BJ (cell line): ENCODE measurements at regions of chr7 and their contacts with region 1.

Region 1: DNA sequence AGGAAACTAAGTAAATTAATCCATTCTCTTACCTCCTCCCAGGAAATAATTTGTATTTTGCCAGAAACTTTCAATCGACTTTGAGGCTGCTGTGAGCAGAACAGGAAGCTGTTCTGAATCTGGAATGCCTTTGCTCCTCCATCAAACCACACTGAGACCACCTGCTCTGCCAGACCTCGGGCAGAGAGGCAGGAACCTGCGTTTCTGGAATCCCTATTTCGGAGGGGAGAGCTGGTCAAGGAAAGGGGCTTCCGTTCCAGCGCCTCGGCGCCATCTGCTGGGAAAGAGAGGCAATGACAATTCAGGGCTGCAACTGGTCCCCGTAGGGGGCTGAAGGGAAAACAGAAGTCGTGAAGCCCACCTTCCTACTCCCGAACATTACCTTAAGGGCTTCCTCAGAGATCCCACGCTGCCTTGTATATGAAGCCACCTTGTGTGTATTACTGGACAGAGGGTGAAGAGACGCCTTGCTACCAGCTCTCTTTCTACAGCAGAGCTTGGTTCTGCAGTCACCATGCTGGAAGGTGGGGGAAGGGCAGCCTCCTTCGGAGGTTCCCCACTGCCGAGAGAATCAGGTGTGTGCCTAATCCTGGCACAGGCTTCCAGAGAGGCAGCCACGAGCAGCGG is 31.2 kb downstream of the ZNF467 start:
- DNase-seq: no peak
- H3K4me3 ChIP-seq: peak overlapping the region; percentile 9; the same call in 1 of the 2 replicates
- H3K27me3 ChIP-seq: peaks cover 2% of the 10 kb centered on the region; the same call in 1 of the 2 replicates
- CTCF ChIP-seq: peak; percentile 94

Region 2: DNA sequence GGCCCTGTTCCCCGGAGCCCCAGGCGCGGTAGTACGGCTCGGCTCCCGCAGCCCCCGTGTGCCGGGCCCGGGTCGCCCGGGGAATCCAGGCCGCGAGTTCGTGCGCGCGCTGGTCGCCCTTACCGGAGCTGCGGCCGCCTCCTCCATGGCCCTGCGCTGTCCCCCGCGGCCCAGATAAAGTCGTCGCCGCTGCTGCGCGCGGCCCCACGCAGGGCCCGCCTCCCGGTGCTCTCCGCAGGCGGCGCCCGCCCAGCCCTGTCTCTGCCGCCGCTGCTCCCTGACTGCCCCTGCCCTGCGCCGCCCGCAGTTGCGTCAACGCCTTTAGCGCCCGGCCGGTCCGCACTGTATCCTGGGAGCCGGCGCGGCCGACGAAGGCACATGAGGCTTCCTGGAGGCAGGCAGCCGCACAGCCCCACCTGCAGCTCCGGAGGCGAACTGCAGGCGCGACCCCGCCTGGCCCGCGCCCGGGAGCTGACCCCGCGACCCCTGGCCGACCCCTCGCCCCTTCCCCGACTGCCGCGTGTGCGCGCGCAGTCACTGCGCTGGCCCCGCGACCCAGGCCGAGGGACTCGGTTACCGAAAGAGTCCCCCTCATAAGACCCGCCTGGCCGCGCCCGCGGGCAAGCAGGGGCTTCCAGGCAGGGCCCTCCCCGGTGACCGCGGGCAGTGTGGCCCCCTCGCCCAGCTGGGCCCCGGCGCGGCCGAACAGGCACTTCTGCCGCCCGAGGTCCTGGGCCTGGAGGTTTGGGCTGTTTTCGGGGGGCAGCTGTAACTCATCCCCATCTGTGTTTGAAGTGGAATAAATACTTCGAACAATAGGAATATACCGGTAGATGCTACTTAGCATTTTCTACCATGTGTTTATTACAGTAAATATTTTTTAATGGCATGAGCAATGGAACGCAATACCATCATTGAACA is 117.5 kb before region 1 on chr7:
- CTCF ChIA-PET with region 1: interaction called, 12 read pairs
- POLR2A ChIA-PET with region 1: no interaction called
- DNase-seq: peak; percentile 39
- H3K4me3 ChIP-seq: peak overlapping the region; percentile 59
- H3K27me3 ChIP-seq: 0 out of 2 replicates have a peak, but pooled peaks cover 2% of the 10 kb centered on the region
- CTCF ChIP-seq: peak; percentile 75

Region 3: DNA sequence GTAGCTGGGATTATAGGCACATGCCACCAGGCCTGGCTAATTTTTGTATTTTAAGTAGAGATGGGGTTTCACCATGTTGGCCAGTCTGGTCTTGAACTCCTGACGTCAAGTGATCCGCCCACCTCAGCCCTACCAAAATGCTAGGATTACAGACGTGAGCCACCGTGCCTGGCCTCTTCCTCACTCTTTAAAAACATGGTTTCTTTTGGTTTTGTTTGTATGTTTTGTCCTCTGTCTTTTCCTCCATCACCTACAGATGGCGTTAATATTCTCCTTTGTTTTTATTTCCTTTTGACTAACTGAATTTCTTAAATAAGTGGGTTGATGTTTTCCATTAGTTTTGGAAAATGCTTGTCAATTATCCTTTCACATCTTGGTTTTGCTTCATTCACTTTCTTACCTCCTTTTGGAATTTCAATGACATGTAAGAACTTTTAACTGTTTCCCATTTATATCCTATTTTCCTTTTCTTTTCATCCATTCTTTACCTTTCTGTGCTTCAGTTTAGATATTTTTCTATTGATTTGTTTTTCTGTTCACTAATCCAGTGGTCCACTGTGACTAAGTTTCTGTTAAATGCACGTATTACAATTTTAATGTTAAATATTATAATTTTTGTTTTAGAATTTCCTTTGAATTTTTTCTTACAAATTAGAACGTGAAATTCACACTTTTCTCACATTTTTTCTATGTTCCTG is 72.9 kb before region 1 on chr7:
- CTCF ChIA-PET with region 1: interaction called, 116 read pairs
- POLR2A ChIA-PET with region 1: interaction called, 3 read pairs
- DNase-seq: no peak
- H3K4me3 ChIP-seq: no peak overlapping the region
- H3K27me3 ChIP-seq: peaks cover 2% of the 10 kb centered on the region
- CTCF ChIP-seq: peak; percentile 49

Region 4: DNA sequence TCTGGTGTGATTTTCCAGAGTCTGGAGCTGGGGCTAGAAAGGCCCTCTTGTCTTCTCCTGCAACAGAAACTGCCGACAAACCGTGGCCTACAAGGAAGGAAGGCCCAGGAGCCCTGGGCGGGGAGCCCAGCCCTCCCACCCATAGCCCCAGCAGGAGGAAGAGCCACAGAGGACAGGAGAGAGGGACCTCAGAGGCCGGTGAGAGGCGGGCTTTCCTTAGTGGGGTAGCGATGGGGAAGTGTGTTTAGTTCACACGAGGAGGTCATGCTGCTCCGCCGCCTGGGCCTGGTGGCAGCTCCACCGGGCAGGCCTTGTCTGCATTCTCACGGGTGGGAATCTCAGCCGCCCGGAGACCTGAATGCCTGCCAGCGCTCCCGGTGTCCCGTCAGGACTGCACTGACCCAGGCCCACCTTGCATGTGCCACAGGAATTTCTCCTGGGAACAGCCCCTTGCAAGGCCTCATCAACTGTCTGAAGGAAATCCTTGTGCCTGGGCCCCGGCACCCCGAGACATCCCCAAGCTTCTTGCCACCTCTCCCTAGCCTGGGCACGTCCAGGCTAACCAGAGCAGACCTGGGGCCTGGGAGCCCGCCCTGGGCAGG is 19.7 kb before region 1 on chr7:
- CTCF ChIA-PET with region 1: interaction called, 13 read pairs
- POLR2A ChIA-PET with region 1: interaction called, 4 read pairs
- DNase-seq: no peak
- H3K4me3 ChIP-seq: no peak overlapping the region
- H3K27me3 ChIP-seq: no peaks in the 10 kb centered on the region
- CTCF ChIP-seq: no peak

Region 5: DNA sequence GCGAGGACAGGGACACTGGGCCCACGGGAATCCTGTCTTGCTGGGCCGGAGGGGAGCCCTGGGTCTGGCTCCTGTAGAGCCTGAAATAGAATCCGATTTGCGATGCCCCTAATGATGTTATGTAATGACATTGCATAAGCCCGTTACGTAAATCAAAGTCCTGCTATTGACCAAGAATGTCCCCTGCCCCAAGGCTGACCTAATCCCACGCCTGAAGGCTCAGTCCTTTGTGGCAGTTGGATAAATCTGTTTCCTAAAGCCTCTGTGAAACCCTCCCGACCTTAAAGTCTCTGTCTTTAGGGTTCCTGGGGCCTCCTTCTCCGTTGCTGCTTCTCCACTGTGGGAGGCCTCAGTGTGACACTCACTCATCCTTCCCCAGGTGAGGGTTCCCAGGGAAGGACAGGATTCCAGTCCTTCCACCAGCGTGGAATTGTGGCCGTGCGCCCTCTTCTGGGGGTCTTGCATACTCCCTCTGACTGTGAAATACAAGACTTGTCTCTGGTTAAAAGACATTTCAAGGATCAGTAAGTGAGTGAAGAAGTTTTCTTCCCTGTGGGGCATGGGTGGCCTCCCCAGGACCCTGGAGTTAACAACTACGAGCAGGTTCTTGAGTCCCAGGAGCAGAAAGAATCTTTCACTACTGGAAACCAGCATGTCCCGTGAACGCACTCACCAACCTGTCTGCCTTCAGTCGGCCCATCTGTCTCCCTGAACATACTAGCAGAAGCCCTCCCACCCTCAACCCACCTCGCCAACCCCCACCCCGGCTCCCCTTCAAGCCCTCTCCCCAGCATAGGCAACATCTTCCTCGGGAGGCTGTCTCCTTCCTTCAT is 11.4 kb after region 1 on chr7:
- CTCF ChIA-PET with region 1: interaction called, 28 read pairs
- POLR2A ChIA-PET with region 1: interaction called, 3 read pairs
- DNase-seq: no peak
- H3K4me3 ChIP-seq: no peak overlapping the region
- H3K27me3 ChIP-seq: peaks cover 4% of the 10 kb centered on the region
- CTCF ChIP-seq: peak; percentile 78